ENCODE measurements at regions of chr6 and their contacts with region 1.

Region 1: DNA sequence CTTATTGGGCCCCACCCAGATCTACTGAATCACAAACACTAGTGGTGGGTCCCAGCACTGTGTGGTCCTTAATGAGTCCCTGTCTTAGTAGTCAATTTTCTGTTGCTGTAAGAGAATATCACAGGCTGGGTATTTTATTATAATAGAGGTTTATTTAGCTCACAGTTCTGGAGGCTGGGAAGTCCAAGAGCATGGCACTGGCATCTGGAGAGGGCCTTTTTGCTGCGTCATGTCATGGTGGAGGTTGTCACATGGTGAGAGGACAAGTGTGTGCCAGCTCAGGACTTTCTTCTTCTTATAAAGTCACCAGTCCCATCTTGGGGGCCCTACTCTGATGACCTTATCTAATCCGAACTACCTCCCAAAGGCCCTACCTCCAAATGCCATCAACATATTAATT is 105.0 kb downstream of the PPP1R14C start:
- DNase-seq: no peak
- H3K4me3 ChIP-seq: no peak overlapping the region
- H3K27ac ChIP-seq: no peak overlapping the region
- H3K4me1 ChIP-seq: no peaks in the 10 kb centered on the region
- H3K27me3 ChIP-seq: no peaks in the 10 kb centered on the region
- CTCF ChIP-seq: no peak
- EP300 ChIP-seq: no peak
- POLR2A ChIP-seq: no peak

Region 2: GRCh38 chr6:150267686-150268561 is 20.1 kb after region 1 on chr6:
- intact Hi-C with region 1: loop called in 1 of 4 experiments (anchors 1 kb)
- DNase-seq: no peak
- H3K4me3 ChIP-seq: no peak overlapping the region
- H3K27ac ChIP-seq: no peak overlapping the region
- H3K4me1 ChIP-seq: no peaks in the 10 kb centered on the region
- H3K27me3 ChIP-seq: no peaks in the 10 kb centered on the region
- CTCF ChIP-seq: no peak
- EP300 ChIP-seq: no peak
- POLR2A ChIP-seq: no peak